ENCODE measurements at regions of chr19 and their contacts with region 1.

Region 1: GRCh38 chr19:36114763-36115452 is at the start of gene POLR2I:
- DNase-seq: peak; percentile 99 to 100 (median 99)
- H3K4me3 ChIP-seq: peak within 1 kb of the TSS; percentile 64
- H3K27ac ChIP-seq: peak within 1 kb of the TSS; percentile 65 to 82
- H3K4me1 ChIP-seq: peaks cover 12% of the 10 kb centered on the region
- H3K27me3 ChIP-seq: no peaks in the 10 kb centered on the region
- CTCF ChIP-seq: peak in 1 of 3 donors; percentile 9
- EP300 ChIP-seq: no peak
- POLR2A ChIP-seq: peak; percentile 82
- total RNA-seq, gene POLR2I: 61.4 to 84.8 (median 70.0) TPM

Region 2: DNA sequence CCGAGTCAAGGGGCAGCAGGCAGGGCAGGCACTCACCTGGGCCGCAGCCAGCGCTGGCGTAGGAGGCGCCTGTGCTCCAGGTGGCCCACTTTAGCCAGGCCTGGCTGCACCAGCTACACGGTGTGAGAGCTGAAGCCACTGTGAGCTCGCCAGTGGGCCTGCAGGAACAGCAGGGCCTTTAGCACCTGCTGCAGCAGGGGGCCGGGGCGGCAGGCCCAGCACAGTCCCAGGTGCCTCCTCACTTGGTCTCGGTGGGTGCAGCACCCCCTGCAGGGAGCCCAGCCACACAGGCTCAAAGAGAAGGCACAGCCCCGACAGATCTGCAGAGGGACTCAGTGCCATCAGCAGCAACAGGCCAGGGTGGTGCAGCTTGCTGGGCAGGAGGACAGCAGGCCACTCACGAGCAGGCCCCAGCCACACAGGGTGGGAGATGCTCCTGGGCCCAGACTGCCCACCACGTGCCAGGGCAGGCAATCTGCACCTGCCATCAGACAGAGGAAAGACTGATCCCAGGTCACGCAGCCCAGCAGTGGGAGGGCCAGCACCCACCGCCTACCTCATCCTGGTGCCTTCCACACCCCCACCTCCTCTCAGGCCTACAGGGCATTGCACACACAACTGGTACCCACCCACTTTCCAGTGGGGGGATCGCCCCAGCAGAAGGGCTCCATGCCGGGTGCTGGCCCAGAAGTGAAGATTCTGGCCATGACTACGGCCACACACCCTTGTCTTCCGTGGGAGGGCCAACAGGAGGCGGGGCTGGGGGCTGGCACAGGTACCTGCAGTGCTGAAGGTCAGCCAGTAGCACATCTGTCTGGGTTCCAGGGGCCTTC is 323.7 kb before region 1 on chr19:
- intact Hi-C with region 1: no loop called
- DNase-seq: peak in 1 of 5 donors; percentile 40
- H3K4me3 ChIP-seq: no peak overlapping the region
- H3K27ac ChIP-seq: no peak overlapping the region
- H3K4me1 ChIP-seq: no peaks in the 10 kb centered on the region
- H3K27me3 ChIP-seq: no peaks in the 10 kb centered on the region
- CTCF ChIP-seq: no peak
- EP300 ChIP-seq: no peak
- POLR2A ChIP-seq: no peak

Region 3: DNA sequence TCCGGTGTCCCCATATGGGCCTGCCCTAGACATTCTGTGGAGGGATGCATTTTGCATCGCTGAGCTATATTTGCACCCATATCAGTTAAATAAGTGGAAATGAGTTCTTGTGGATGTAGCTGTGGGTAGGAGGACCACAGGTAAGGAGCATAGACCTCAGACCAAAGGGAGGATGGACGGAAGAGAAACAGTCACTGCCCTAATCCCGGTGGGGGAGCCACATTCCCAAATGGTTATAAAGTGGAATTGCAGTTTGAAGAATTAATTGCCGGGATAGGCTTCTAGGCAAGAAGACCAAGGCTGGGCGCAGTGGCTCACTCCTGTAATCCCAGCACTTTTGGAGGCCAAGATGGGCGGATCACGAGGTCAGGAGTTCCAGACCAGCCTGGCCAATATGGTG is 118.1 kb before region 1 on chr19:
- intact Hi-C with region 1: loop called in 1 of 4 experiments (anchors 2 kb)
- DNase-seq: no peak
- H3K4me3 ChIP-seq: no peak overlapping the region
- H3K27ac ChIP-seq: no peak overlapping the region
- H3K4me1 ChIP-seq: peaks cover 9% of the 10 kb centered on the region
- H3K27me3 ChIP-seq: no peaks in the 10 kb centered on the region
- CTCF ChIP-seq: no peak
- EP300 ChIP-seq: no peak
- POLR2A ChIP-seq: no peak

Region 4: GRCh38 chr19:36041831-36042230 is 73.1 kb before region 1 on chr19:
- intact Hi-C with region 1: no loop called
- DNase-seq: peak in 2 of 5 donors; percentile 40 to 44
- H3K4me3 ChIP-seq: no peak overlapping the region
- H3K27ac ChIP-seq: peak overlapping the region in 1 of 2 donors; percentile 44
- H3K4me1 ChIP-seq: peaks cover 2% of the 10 kb centered on the region
- H3K27me3 ChIP-seq: no peaks in the 10 kb centered on the region
- CTCF ChIP-seq: no peak
- EP300 ChIP-seq: no peak
- POLR2A ChIP-seq: no peak

Region 5: DNA sequence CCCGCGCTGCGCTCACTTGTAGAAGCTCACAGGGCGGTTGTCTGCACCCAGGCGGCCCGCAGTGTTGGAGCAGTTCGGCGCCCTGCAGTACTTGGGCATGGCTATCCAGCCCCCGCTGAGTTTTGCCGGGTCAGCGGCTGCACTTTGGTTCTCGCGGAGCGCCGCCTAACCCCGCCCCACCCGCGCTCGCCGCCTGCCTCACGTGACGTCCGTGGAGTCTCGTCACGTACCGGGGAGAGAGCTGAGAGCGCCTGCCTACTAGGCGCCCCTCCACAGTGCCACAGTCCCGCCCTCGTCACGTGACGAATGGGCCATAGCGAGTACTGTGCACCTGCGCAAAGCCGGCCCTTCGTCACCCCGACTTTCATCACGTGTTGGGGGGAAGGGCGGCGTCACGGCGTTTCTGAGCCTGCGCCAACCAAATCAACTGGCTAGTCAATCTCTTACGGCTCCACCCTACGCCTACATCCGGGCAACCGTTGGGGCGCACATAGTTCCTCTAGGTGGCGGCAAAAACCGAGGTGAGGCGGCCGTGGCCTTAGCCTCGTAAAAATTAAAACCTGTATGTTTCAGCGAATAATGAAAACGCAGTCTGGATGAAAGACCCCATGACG is 60.7 kb before region 1 on chr19 and contains the start of gene THAP8:
- intact Hi-C with region 1: loop called in 1 of 4 experiments (anchors 2 kb)
- DNase-seq: peak; percentile 100
- H3K4me3 ChIP-seq: peak within 1 kb of the TSS; percentile 67
- H3K27ac ChIP-seq: peak within 1 kb of the TSS; percentile 38 to 94
- H3K4me1 ChIP-seq: peaks cover 1% of the 10 kb centered on the region
- H3K27me3 ChIP-seq: no peaks in the 10 kb centered on the region
- CTCF ChIP-seq: peak; percentile 19 to 85 (median 71)
- EP300 ChIP-seq: peak; percentile 83
- POLR2A ChIP-seq: peak; percentile 52
- total RNA-seq, gene THAP8: 5.3 to 7.9 (median 6.5) TPM

Measured in ovary (tissue), 10 donors.